ENCODE measurements at regions of chrX and their contacts with region 1.

Region 1: GRCh38 chrX:134990801-134991481 is at the start of gene SMIM10:
- DNase-seq: no peak
- ATAC-seq: peak; percentile 96
- H3K4me3 ChIP-seq: peak within 1 kb of the TSS; percentile 48 to 61
- H3K27ac ChIP-seq: peak within 1 kb of the TSS; percentile 95
- H3K4me1 ChIP-seq: peaks cover 14% of the 10 kb centered on the region
- H3K27me3 ChIP-seq: no peaks in the 10 kb centered on the region
- CTCF ChIP-seq: no peak
- total RNA-seq, gene SMIM10: 7.2 TPM

Region 2: GRCh38 chrX:134807039-134807731 is 183.8 kb before region 1 on chrX:
- CTCF ChIA-PET with region 1: no interaction called
- POLR2A ChIA-PET with region 1: no interaction called
- in situ Hi-C with region 1: no loop called
- intact Hi-C with region 1: loop called (anchors 10 kb)
- DNase-seq: peak; percentile 75
- ATAC-seq: peak; percentile 94
- H3K4me3 ChIP-seq: peak overlapping the region; percentile 79 to 93
- H3K27ac ChIP-seq: peak overlapping the region; percentile 93
- H3K4me1 ChIP-seq: peaks cover 21% of the 10 kb centered on the region
- H3K27me3 ChIP-seq: no peaks in the 10 kb centered on the region
- CTCF ChIP-seq: no peak

Measured in Panc1 (cell line).